Psoas muscle (tissue), 8 donors: ENCODE measurements at regions of chr2 and their contacts with region 1.

Region 1: DNA sequence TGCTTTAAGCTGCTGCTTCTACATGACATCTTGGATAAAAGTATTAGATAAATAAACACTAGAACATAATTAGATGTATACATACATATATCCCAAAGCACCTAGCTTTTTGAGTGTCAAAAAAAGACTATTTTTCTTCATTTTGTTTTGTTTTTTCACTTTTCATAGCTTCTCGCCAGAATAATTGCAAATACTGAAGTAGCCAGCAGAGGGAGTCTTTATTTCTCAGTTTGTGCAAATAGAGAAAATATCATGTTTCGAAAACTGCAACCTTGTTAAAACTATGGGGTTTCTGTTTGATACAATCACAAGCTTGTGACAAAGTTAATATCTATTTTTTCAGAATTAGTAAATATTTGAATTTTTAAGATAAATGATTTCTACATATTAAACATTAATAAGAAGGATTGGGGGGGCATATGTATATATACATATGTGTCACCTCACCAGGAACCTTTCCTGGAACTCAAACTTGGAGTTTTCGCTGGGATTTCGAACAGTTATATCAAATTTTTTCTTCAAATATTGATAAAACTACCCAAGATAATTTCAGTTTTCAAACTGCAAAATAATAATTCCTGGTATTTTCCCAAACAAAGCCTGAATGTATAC is 61.0 kb downstream of the GRB14 start:
- DNase-seq: no peak
- ATAC-seq: peak in 1 of 4 donors; percentile 72
- H3K4me3 ChIP-seq: peak overlapping the region; percentile 23
- H3K27ac ChIP-seq: no peak overlapping the region
- H3K4me1 ChIP-seq: peaks cover 6% of the 10 kb centered on the region
- H3K27me3 ChIP-seq: no peaks in the 10 kb centered on the region
- CTCF ChIP-seq: peak; percentile 70

Region 2: DNA sequence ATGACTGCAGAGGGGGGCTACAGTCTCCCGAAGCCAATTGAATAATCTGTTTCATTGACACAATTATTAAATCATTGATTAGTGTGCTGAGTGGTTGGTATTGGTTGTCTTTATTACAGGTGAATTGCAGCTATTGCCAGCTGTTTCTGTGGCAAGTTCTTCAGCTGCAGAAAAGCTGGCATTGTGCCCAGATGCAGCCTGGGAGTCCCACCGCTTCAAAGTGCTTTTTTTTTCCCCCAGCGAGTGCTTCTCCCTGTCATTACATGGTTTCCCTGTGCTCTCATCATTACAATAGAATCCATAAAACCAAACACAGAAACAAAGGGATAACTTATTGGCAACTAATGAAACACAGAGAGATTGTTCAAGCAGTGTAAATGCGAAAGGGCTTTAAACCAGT is 103.7 kb before region 1 on chr2:
- intact Hi-C with region 1: no loop called
- DNase-seq: no peak
- ATAC-seq: no peak
- H3K4me3 ChIP-seq: no peak overlapping the region
- H3K27ac ChIP-seq: no peak overlapping the region
- H3K4me1 ChIP-seq: no peaks in the 10 kb centered on the region
- H3K27me3 ChIP-seq: no peaks in the 10 kb centered on the region
- CTCF ChIP-seq: no peak

Region 3: DNA sequence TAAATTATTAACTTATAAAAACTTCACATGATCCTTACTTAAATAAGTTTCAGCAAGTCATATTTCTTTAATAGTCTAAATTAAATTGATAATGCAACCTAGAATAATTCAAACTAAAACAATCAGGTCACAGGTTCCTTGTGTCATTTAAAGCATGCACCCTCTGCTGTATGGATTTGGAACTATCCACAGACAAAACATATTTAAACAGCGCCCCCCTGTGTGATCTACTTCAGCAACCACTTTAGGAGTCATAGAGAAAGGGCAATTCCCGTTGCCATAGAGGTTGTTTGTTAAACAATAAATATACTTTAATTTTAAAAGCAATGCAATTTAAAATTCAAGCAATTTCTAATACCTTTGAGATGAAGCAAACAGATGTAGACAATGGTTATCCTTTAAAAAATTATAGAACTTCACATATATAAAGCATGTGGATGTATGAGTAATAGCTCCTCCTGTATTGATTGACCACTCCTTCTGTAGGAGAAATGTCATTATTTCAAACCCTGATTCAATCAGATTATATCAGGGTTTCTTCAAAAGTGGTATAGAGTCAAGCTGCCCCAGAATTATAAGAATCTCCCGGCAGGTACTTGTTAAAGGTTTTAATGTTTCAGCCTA is 39.8 kb after region 1 on chr2:
- intact Hi-C with region 1: loop called (anchors 5 kb)
- DNase-seq: no peak
- ATAC-seq: peak in 3 of 4 donors; percentile 80 to 93 (median 92)
- H3K4me3 ChIP-seq: no peak overlapping the region
- H3K27ac ChIP-seq: no peak overlapping the region
- H3K4me1 ChIP-seq: no peaks in the 10 kb centered on the region
- H3K27me3 ChIP-seq: no peaks in the 10 kb centered on the region
- CTCF ChIP-seq: peak; percentile 52

Region 4: GRCh38 chr2:164657129-164657528 is 96.8 kb after region 1 on chr2:
- intact Hi-C with region 1: loop called in 1 of 2 experiments (anchors 10 kb)
- DNase-seq: no peak
- ATAC-seq: no peak
- H3K4me3 ChIP-seq: no peak overlapping the region
- H3K27ac ChIP-seq: no peak overlapping the region
- H3K4me1 ChIP-seq: peaks cover 5% of the 10 kb centered on the region
- H3K27me3 ChIP-seq: no peaks in the 10 kb centered on the region
- CTCF ChIP-seq: no peak

Region 5: DNA sequence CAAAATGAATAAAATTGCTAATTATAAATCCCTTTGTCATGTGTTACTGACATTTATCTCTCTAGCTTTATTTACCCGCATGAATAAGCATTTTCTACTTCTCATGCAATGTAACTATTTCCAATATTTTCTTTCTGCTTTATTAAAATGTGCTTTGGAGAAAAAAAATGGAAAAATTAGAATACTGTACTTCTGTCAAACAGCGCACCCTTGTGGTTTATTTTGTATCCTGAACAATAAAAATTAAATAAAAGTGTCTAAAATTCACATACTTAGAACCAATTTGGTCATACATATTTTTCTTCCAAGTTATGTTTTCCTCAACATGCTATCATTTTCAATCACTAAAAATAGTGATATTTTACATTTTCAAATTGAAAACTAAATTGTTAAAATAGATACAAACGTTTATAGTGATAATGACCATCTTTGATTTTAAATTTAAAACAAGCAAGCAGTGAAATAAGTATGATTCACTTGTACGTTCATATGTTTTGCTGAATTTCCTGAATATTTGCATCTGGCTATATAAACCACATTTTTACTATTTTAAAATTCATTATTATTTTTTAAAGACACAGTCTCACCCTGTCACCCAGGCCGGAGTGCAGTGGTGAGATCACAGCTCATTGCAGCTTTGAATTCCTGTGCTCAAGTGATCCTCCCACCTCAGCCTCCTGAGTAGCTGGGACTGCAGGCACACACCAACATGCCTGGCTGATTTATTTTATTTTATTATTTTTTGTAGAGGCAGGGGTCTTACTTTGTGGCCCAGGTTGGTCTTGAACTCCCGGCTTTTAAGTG is 156.9 kb after region 1 on chr2:
- intact Hi-C with region 1: loop called (anchors 2 to 5 kb)
- DNase-seq: no peak
- ATAC-seq: no peak
- H3K4me3 ChIP-seq: no peak overlapping the region
- H3K27ac ChIP-seq: no peak overlapping the region
- H3K4me1 ChIP-seq: no peaks in the 10 kb centered on the region
- H3K27me3 ChIP-seq: no peaks in the 10 kb centered on the region
- CTCF ChIP-seq: peak; percentile 66

Region 6: GRCh38 chr2:164847981-164848741 is 287.9 kb after region 1 on chr2:
- intact Hi-C with region 1: no loop called
- DNase-seq: no peak
- ATAC-seq: no peak
- H3K4me3 ChIP-seq: no peak overlapping the region
- H3K27ac ChIP-seq: no peak overlapping the region
- H3K4me1 ChIP-seq: no peaks in the 10 kb centered on the region
- H3K27me3 ChIP-seq: no peaks in the 10 kb centered on the region
- CTCF ChIP-seq: no peak